Gastrocnemius medialis (tissue), 4 donors: ENCODE measurements at regions of chr19 and their contacts with region 1.

Region 1: DNA sequence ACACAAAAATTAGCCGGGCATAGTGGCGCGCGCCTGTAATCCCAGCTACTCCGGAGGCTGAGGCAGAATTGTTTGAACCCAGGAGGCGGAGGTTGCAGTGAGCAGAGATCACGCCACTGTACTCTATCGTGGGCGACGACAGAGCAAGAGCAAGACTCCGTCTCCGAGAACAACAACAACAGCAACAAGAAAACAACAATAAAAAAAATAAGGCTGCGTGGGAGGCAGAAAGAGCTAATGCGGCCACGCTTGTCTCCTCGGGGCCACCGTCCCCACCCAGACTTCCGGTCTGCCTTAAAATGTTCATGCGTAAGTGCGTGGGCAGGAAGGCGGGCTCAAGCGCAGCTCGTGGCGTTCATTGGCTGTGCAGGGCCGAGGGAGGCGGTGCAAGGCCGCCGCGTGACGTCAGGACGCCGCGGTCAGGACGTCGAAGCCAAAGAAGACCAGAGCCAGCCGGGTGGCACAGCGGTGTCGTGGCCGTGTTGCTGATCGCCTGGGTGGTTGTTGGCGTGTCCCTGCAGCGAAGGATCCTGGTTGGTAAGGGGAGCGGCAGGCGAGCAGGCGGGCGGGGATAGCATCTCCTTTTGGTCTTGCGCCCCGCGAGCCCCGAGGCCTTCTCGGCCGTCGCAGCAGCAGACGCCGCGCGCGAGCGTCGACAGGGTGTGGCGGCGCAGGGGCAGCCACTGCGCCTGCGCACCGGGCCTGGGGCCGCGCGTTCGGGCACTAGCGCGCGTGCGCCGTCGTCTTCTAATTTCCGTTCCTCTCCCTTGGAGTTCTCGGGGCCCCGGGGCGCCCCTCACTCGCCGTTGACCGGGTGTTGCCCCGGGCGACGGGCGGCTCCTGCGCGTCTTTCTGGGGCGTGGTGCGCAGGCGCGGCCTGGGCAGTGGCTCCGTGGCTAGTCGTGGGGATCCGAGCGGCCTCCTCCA is at the start of gene LENG8:
- DNase-seq: peak; percentile 97 to 98
- ATAC-seq: peak; percentile 95 to 96
- H3K4me3 ChIP-seq: peak within 1 kb of the TSS; percentile 87 to 95 (median 90)
- H3K27ac ChIP-seq: peak within 1 kb of the TSS; percentile 92 to 98 (median 93)
- H3K4me1 ChIP-seq: peaks cover 22 to 31% of the 10 kb centered on the region in 2 donors
- H3K27me3 ChIP-seq: no peaks in the 10 kb centered on the region
- CTCF ChIP-seq: no peak
- POLR2A ChIP-seq: peak; percentile 89 to 95
- total RNA-seq, gene LENG8: 9.9 to 49.5 (median 15.5) TPM

Region 2: DNA sequence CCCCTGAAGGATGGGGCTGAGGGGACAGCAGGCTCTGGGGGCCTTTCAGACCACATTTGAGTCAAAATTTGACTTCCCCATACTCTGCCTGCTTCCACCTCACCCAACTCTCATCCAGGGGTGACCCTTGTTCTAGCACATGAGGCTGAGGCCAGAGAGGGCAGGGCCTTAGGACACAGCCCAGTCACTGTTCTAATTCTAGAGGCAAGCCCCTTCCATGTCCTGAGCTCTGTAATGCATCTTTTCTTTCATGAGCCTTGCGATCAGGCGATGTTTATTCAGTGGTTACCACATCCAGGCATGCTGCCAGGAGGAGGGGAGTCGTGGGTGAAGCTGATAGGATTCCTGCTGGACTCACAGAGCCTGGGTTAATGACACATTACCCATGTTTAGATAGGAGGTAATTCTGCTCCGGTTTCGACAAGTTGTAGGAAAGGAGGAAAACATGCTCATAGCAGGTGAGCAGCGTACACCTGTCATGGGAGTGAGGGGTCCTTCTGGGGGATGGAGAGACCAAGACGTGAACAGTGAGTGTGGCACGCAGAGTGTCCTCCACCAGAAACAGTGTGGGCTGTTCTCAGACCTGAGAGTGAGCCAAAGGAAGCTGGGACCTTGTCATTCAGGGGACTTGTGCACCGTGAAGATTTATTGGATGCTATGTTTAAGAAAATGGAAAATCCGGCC is 239.1 kb before region 1 on chr19:
- in situ Hi-C with region 1: loop called in 1 of 4 experiments (anchors 10 kb)
- intact Hi-C with region 1: no loop called
- DNase-seq: peak; percentile 66 to 84
- ATAC-seq: peak; percentile 87 to 89
- H3K4me3 ChIP-seq: no peak overlapping the region
- H3K27ac ChIP-seq: peak overlapping the region; percentile 74 to 95 (median 86)
- H3K4me1 ChIP-seq: peaks cover 38 to 47% of the 10 kb centered on the region in 2 donors
- H3K27me3 ChIP-seq: no peaks in the 10 kb centered on the region
- CTCF ChIP-seq: no peak
- POLR2A ChIP-seq: peak; percentile 46 to 50

Region 3: DNA sequence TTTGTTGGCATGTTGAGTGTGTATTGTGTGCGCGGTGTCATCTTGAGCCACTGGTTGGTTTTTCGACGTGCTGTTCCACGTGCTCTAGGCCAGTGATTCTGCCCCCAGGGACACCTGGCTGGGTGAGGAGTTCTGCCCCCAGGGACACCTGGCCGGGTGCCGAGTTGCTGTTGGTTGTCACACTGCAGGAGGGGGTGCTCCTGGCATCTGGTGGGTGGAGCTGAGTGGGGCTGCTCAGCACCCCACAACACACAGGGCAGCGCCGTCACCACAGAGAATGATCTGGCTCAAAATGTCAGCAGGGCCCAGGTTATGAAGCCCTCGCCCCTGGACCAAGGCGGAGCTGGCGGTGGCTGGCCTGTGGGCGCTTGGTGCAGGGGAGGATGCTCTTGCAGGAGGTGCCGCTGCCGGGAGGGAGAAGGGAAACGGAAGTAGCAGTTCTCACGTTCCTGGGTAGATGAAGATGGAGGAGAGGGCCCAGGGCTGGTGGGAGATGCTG is 14.3 kb before region 1 on chr19:
- in situ Hi-C with region 1: no loop called
- intact Hi-C with region 1: no loop called
- DNase-seq: no peak
- ATAC-seq: no peak
- H3K4me3 ChIP-seq: no peak overlapping the region
- H3K27ac ChIP-seq: no peak overlapping the region
- H3K4me1 ChIP-seq: peaks cover 20 to 46% of the 10 kb centered on the region in 2 donors
- H3K27me3 ChIP-seq: peaks cover 14 to 27% (median 21%) of the 10 kb centered on the region in 3 donors
- CTCF ChIP-seq: no peak
- POLR2A ChIP-seq: no peak

Region 4: DNA sequence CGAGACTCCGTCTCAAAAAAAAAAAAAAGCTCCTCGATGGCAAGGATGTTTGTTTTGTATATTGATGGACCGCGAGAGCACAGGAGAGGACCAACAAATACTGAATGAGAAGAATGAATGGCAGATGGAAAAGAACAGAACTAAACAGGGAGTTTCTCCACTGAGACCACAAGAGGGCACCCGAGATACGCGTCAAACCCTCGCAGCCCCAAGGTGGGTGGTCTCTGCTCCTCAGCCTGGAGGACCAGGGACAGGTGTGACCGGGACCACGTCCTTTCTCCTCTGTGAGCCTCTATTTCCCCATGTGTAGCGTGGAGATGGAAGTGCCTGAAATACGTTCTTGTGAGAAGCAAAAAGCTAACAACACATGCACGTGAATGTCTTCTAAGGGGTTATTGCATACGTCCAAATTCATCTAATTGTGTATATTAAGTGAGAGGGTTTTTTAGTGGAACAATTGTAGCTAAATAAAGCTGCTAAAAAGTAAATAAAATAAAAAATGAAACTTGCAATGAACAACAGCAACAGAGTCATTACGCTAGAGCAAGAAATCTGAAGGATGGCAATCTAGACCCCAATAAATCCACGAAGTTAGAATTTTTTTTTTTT is 32.4 kb after region 1 on chr19:
- in situ Hi-C with region 1: no loop called
- intact Hi-C with region 1: loop called (anchors 1 kb)
- DNase-seq: no peak
- ATAC-seq: no peak
- H3K4me3 ChIP-seq: no peak overlapping the region
- H3K27ac ChIP-seq: no peak overlapping the region
- H3K4me1 ChIP-seq: no peaks in the 10 kb centered on the region
- H3K27me3 ChIP-seq: peaks cover 0 to 8% (median 0%) of the 10 kb centered on the region in 3 donors
- CTCF ChIP-seq: peak in 3 of 5 experiments; percentile 24 to 49 (median 35)
- POLR2A ChIP-seq: no peak